IMR-90 (cell line): ENCODE measurements at regions of chr9 and their contacts with region 1.

Region 1: DNA sequence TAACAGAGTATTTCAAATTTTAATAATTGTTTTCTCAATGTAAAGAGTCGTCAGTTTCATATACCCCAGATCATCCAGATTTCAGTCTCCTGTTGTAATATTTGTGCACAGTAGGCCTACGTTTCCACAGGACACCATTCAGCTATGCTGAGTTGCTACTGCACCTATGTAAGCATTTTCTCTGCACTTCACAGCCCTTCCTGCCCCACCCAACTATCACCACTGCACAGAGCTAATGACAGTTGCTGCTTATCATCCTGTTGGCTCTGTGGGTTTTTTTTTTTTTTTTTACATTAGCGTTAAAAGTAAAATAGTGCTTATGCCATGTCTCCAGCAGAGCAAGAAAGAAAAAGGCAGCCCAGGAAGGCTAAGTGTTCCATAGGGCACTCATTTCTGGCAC is 5.9 kb upstream of the PRKACG start:
- DNase-seq: no peak
- ATAC-seq: no peak
- H3K4me3 ChIP-seq: no peak overlapping the region
- H3K27ac ChIP-seq: no peak overlapping the region
- H3K4me1 ChIP-seq: no peaks in the 10 kb centered on the region
- H3K27me3 ChIP-seq: peaks cover 16% of the 10 kb centered on the region
- CTCF ChIP-seq: no peak
- POLR2A ChIP-seq: no peak
- RAD21 ChIP-seq: no peak

Region 2: GRCh38 chr9:68861436-68861835 is 158.4 kb before region 1 on chr9:
- CTCF ChIA-PET with region 1: no interaction called
- POLR2A ChIA-PET with region 1: no interaction called
- dilution Hi-C with region 1: no loop called
- in situ Hi-C with region 1: no loop called
- intact Hi-C with region 1: loop called (anchors 1 kb)
- DNase-seq: no peak
- ATAC-seq: no peak
- H3K4me3 ChIP-seq: no peak overlapping the region
- H3K27ac ChIP-seq: no peak overlapping the region
- H3K4me1 ChIP-seq: no peaks in the 10 kb centered on the region
- H3K27me3 ChIP-seq: no peaks in the 10 kb centered on the region; the same call in 1 of the 2 replicates
- CTCF ChIP-seq: no peak
- POLR2A ChIP-seq: no peak
- RAD21 ChIP-seq: no peak

Region 3: DNA sequence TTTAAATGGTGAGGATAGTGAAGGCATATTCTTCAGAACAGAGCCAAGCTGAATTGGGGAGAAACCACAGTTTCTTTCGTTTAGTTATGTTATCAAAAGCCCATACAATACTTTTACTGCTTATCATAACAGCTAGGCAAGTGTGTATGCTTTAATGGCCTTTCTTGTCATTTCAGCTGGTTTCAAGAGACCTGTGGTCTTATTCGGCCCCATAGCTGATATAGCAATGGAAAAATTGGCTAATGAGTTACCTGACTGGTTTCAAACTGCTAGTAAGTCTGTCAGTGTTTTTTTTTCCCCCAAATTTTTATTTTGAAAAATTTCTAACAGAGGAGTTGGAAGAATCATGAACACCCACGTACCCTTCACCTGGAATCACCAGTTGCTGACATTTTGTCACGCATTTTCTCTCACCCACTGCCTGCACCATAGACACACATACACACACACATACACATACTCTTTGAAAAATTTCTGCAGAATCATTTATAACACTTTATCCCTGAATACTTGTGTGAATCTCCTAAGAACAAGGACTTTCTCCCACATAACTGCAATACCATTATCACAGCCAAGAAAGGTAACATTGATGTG is 218.0 kb after region 1 on chr9:
- CTCF ChIA-PET with region 1: no interaction called
- POLR2A ChIA-PET with region 1: no interaction called
- dilution Hi-C with region 1: no loop called
- in situ Hi-C with region 1: no loop called
- intact Hi-C with region 1: no loop called
- DNase-seq: no peak
- ATAC-seq: no peak
- H3K4me3 ChIP-seq: no peak overlapping the region
- H3K27ac ChIP-seq: no peak overlapping the region
- H3K4me1 ChIP-seq: no peaks in the 10 kb centered on the region
- H3K27me3 ChIP-seq: no peaks in the 10 kb centered on the region
- CTCF ChIP-seq: no peak
- POLR2A ChIP-seq: no peak
- RAD21 ChIP-seq: no peak